ENCODE measurements at regions of chr1 and their contacts with region 1.

Region 1: DNA sequence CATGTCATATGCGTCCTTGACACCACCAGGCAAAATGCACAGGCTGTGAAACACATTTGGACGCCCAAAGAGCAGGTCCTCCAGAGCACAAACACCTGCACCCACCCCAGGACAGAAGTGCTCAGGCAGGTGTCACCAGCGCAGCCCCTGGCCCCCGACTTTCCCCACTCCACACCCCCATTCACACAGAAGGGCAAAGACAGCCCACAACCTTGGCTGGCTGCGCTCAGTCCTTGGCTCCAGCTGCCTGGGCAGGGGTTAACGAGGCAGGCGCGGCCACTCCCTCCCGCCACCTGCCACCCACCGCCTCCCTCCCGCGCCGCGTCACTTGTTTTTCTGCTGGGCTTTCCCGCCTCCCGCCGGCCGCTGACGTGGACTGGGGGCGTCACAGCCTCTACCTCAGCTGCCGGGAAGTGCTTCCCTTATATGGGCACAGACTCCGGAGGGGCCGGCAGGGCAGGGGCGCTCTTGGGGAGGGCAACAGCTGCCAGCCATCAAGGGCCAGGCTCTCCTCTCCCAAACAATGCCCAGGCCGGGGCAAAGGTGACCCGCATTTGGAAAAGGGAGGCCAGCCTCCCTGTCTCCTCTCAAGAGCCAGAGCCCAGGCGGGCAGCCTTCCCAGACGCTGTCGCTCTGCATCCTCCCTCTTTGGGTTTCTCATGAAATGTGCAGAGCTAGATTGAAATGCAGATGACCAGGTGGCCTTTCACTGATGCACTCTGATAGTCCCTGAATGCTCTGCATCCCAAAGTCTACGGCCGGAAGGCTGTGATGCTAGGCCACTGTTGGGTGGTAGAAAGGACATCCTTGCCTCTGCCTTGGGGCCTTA is 14.8 kb upstream of the BTG2 start:
- DNase-seq: peak; percentile 91 to 99 (median 98)
- ATAC-seq: peak; percentile 67 to 73 (median 71)
- H3K4me3 ChIP-seq: peak overlapping the region; percentile 30 to 49
- H3K4me3 Mint-ChIP-seq: peak overlapping the region; percentile 77 to 80 (median 78)
- H3K27ac ChIP-seq: peak overlapping the region; percentile 99
- H3K27ac Mint-ChIP-seq: peak overlapping the region; percentile 95 to 99
- H3K4me1 ChIP-seq: peaks cover 43 to 64% of the 10 kb centered on the region in 2 experiments
- H3K4me1 Mint-ChIP-seq: peaks cover 80 to 88% (median 83%) of the 10 kb centered on the region in 3 donors
- H3K27me3 ChIP-seq: no peaks in the 10 kb centered on the region
- H3K27me3 Mint-ChIP-seq: no peaks in the 10 kb centered on the region

Region 2: GRCh38 chr1:203320591-203321272 is 30.3 kb after region 1 on chr1:
- CTCF ChIA-PET with region 1: interaction called in 1 of 2 experiments, 10 read pairs
- POLR2A ChIA-PET with region 1: interaction called, 17 to 18 read pairs
- DNase-seq: peak; percentile 64 to 93 (median 81)
- ATAC-seq: peak; percentile 74 to 83 (median 80)
- H3K4me3 ChIP-seq: no peak overlapping the region
- H3K4me3 Mint-ChIP-seq: peak overlapping the region; percentile 55 to 71 (median 70)
- H3K27ac ChIP-seq: peak overlapping the region; percentile 100
- H3K27ac Mint-ChIP-seq: peak overlapping the region; percentile 97
- H3K4me1 ChIP-seq: peaks cover 69 to 75% of the 10 kb centered on the region in 2 experiments
- H3K4me1 Mint-ChIP-seq: peaks cover 89 to 94% (median 94%) of the 10 kb centered on the region in 3 donors
- H3K27me3 ChIP-seq: no peaks in the 10 kb centered on the region
- H3K27me3 Mint-ChIP-seq: no peaks in the 10 kb centered on the region

Measured in T-cell (primary cell).